ENCODE measurements at regions of chr6 and their contacts with region 1.

Region 1: DNA sequence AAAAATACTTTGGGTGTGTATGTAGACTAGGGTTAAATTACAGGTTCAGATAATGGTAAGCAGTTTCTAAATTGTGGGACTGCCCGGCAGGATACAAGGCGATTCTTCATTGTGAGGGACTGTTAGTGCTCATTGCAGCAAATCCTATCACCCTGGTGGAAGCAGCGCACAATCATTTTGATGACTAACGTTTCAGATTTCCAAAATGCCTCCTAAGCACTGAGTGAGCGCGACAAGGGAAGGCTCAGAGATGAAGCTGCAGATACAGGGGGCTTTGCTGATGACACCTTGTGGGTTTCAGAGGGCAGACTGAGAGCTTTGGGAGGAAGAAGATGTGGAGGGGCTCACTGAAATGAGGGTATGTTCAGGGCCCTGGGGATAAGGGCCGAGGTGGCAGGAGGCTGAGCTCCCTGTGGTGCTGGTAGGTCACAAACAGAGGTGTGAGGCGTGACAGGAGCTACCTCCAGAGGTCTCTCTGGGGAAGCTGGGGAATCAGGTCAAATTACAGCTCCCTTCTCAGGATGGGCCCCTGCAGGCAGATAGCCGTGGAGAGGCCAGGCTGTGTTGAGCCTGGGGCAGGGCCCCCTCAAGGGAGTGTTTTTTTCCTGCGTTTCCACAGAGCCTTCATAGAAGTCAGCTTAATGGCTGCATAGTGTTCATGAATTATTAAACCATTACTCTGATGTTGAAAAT is 84.5 kb upstream of the FYN start:
- DNase-seq: peak; percentile 56
- ATAC-seq: peak; percentile 98
- H3K4me3 Mint-ChIP-seq: no peak overlapping the region
- H3K27ac Mint-ChIP-seq: no peak overlapping the region
- H3K4me1 Mint-ChIP-seq: no peaks in the 10 kb centered on the region; the same call in 1 of the 2 replicates
- H3K27me3 Mint-ChIP-seq: no peaks in the 10 kb centered on the region
- CTCF ChIP-seq: no peak

Region 2: GRCh38 chr6:111873178-111874024 is 84.4 kb before region 1 on chr6 and contains the start of gene FYN:
- CTCF ChIA-PET with region 1: interaction called, 10 read pairs
- POLR2A ChIA-PET with region 1: no interaction called
- DNase-seq: peak; percentile 99
- ATAC-seq: peak; percentile 94
- H3K4me3 Mint-ChIP-seq: peak within 1 kb of the TSS; percentile 91
- H3K27ac Mint-ChIP-seq: peak within 1 kb of the TSS; percentile 76
- H3K4me1 Mint-ChIP-seq: peaks cover 45% of the 10 kb centered on the region
- H3K27me3 Mint-ChIP-seq: peaks cover 23% of the 10 kb centered on the region
- CTCF ChIP-seq: no peak
- total RNA-seq, gene FYN: 57.1 to 63.9 TPM (median 59.0 TPM) in 3 replicates

Region 3: GRCh38 chr6:111985202-111985731 is 27.5 kb after region 1 on chr6:
- CTCF ChIA-PET with region 1: interaction called, 13 read pairs
- POLR2A ChIA-PET with region 1: no interaction called
- DNase-seq: no peak
- ATAC-seq: peak; percentile 87
- H3K4me3 Mint-ChIP-seq: no peak overlapping the region
- H3K27ac Mint-ChIP-seq: peak overlapping the region; percentile 47
- H3K4me1 Mint-ChIP-seq: peaks cover 34% of the 10 kb centered on the region
- H3K27me3 Mint-ChIP-seq: peaks cover 42% of the 10 kb centered on the region
- CTCF ChIP-seq: no peak

Measured in WTC11 (cell line).